Dorsolateral prefrontal cortex (tissue), 120 donors: ENCODE measurements at regions of chr5 and their contacts with region 1.

Region 1: GRCh38 chr5:93582677-93583438 is at the start of gene NR2F1:
- DNase-seq: peak in 5 of 10 donors; percentile 60 to 88 (median 69)
- H3K4me3 ChIP-seq: peak within 1 kb of the TSS; percentile 47 to 86 (median 72)
- H3K27ac ChIP-seq: peak within 1 kb of the TSS in 58 of 59 donors; percentile 60 to 95 (median 88)
- H3K27me3 ChIP-seq: peaks cover 0 to 7% (median 0%) of the 10 kb centered on the region in 45 donors
- CTCF ChIP-seq: no peak
- total RNA-seq, gene NR2F1: 46.1 to 145 (median 98.5) TPM

Region 2: GRCh38 chr5:92687821-92688722 is 894.8 kb before region 1 on chr5:
- intact Hi-C with region 1: loop called (anchors 10 kb)
- DNase-seq: peak in 2 of 10 donors; percentile 6 to 15
- H3K4me3 ChIP-seq: peak overlapping the region in 57 of 59 donors; percentile 8 to 60 (median 42)
- H3K27ac ChIP-seq: peak overlapping the region in 50 of 59 donors; percentile 1 to 80 (median 56)
- H3K27me3 ChIP-seq: no peaks in the 10 kb centered on the region
- CTCF ChIP-seq: peak in 52 of 56 donors; percentile 26 to 68 (median 46)

Region 3: GRCh38 chr5:92916036-92916435 is 666.8 kb before region 1 on chr5:
- intact Hi-C with region 1: loop called in 1 of 2 experiments (anchors 10 kb)
- DNase-seq: no peak
- H3K4me3 ChIP-seq: no peak overlapping the region
- H3K27ac ChIP-seq: no peak overlapping the region
- H3K27me3 ChIP-seq: no peaks in the 10 kb centered on the region
- CTCF ChIP-seq: peak in 52 of 56 donors; percentile 13 to 72 (median 44)

Region 4: GRCh38 chr5:93150311-93151012 is 432.4 kb before region 1 on chr5:
- intact Hi-C with region 1: no loop called
- DNase-seq: no peak
- H3K4me3 ChIP-seq: no peak overlapping the region
- H3K27ac ChIP-seq: no peak overlapping the region
- H3K27me3 ChIP-seq: no peaks in the 10 kb centered on the region
- CTCF ChIP-seq: no peak

Region 5: DNA sequence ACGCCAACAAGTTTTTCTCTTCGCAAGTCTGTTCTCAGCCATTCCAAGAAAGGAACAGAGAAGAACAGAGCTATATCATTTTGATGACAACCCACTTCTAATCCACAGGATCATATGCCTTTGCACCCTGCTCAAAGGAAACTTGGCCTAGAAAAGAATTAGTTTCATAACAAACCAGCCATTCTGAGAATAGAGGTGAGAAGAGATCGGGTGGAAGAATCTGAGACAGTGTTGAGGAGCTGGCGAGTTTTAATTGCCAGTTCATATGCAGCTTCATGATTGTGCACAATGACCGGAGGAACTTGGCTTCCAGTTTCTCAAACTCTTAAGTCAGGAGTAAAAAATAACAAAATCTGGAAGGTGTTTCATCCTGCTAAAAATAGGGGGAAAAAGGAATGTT is 381.8 kb before region 1 on chr5:
- intact Hi-C with region 1: loop called in 1 of 2 experiments (anchors 5 kb)
- DNase-seq: peak in 1 of 10 donors; percentile 16
- H3K4me3 ChIP-seq: no peak overlapping the region
- H3K27ac ChIP-seq: peak overlapping the region in 36 of 59 donors; percentile 18 to 87 (median 62)
- H3K27me3 ChIP-seq: no peaks in the 10 kb centered on the region
- CTCF ChIP-seq: no peak

Region 6: DNA sequence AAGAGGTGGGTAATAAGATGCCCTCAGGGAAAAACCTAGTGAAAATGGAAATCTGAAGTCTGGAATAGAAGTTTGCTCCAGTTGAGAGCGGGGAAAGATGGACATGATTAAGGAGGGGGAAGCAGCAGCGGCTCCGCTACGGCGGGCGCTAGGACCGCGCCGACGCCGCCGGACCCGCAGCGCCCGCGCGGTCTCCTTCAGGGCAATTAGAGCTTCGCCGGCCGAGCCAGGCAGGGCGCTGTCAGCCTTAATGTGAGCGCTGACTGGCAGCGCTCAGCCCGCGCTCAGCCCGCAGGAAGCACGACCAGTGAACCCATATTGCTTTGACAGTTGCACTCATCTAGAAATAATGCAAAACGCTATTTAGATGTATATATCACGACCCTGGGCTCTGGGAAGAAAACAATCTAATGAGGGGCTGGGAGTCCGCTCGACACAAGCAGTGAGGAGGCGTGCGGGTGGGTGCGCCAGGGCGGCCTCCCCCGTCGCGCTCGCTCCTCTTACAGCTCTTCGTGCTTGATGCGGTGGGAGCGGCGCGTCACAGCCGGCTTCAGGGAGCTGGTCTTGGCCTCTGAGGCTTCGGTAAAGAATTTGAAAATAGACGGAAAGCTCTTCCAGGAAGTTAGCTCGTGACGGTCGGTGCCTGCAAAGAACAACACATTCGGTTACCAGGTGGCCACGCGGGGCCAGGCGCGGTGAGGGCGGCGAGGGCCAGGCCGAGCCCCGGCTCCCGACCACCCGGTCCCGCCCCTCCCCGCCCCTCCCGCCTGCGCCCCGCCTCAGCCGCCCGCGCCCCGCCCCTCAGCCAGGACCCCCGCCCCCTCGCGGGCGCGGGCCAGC is 37.8 kb after region 1 on chr5:
- intact Hi-C with region 1: loop called in 1 of 2 experiments (anchors 5 kb)
- DNase-seq: peak; percentile 57 to 86 (median 76)
- H3K4me3 ChIP-seq: peak overlapping the region; percentile 59 to 90 (median 76)
- H3K27ac ChIP-seq: peak overlapping the region in 58 of 59 donors; percentile 66 to 95 (median 88)
- H3K27me3 ChIP-seq: no peaks in the 10 kb centered on the region
- CTCF ChIP-seq: peak in 41 of 56 donors; percentile 7 to 53 (median 31)

Region 7: GRCh38 chr5:93800988-93801811 is 218.3 kb after region 1 on chr5:
- intact Hi-C with region 1: loop called in 1 of 2 experiments (anchors 5 kb)
- DNase-seq: peak in 1 of 10 donors; percentile 15
- H3K4me3 ChIP-seq: peak overlapping the region in 14 of 59 donors; percentile 1 to 38 (median 22)
- H3K27ac ChIP-seq: peak overlapping the region in 5 of 59 donors; percentile 2 to 33 (median 23)
- H3K27me3 ChIP-seq: no peaks in the 10 kb centered on the region
- CTCF ChIP-seq: peak; percentile 54 to 96 (median 82)

Region 8: GRCh38 chr5:93915142-93915553 is 332.3 kb after region 1 on chr5:
- intact Hi-C with region 1: loop called (anchors 5 to 10 kb)
- DNase-seq: no peak
- H3K4me3 ChIP-seq: no peak overlapping the region
- H3K27ac ChIP-seq: no peak overlapping the region
- H3K27me3 ChIP-seq: no peaks in the 10 kb centered on the region
- CTCF ChIP-seq: peak; percentile 15 to 76 (median 56)